ENCODE measurements at regions of chr12 and their contacts with region 1.

Region 1: GRCh38 chr12:68610370-68611093 is at the start of gene RAP1B:
- DNase-seq: peak; percentile 69
- ATAC-seq: peak; percentile 93
- H3K4me3 ChIP-seq: peak within 1 kb of the TSS; percentile 90 to 95
- H3K27ac ChIP-seq: peak within 1 kb of the TSS; percentile 78
- H3K4me1 ChIP-seq: peaks cover 8 to 26% of the 10 kb centered on the region in 2 experiments; a peak in 3 of 4 replicates
- H3K27me3 ChIP-seq: no peaks in the 10 kb centered on the region
- CTCF ChIP-seq: no peak
- POLR2A ChIP-seq: peak; percentile 75
- RAD21 ChIP-seq: no peak
- total RNA-seq, gene RAP1B: 79.2 TPM

Region 2: DNA sequence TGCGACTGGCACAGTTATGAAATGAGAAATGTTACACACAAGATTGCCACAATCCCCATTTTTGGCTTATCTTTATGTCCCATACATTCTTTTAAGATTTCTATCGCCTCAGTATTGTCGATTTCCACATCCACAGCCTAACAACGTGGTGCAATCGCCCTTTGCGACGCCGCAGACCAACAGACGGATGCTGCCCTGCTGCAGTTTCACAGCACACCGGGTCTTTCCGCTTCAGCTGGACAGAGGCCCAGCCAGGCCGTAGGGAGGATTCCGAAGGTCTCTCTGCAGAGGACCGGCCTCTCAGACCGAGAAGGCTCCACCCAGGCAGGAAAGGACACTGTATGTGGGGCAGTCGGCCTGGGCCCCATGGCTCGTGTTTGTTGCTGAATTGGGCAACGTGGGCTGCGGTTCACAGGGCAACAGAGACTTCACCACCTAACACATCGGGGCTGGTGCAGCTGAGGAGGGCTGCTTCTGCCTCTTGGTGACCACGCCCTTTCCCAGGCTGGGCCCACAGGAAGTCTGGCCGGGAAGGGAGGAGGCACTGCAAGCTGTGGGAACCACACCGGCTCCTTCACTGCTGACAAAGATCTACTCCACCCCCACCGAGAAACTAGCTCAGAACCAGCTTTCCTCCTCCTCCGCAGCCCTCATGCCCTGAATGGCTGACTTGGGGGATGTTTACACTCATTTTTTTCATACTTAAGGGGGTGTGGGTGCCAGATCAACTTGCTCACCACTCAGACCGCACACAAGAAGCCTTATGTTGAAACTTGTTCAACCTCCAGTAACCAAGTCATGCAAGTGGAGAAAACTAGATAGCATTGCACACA is 245.4 kb before region 1 on chr12:
- CTCF ChIA-PET with region 1: no interaction called
- POLR2A ChIA-PET with region 1: no interaction called
- RAD21 ChIA-PET with region 1: interaction called in 1 of 2 experiments, 3 read pairs
- intact Hi-C with region 1: loop called (anchors 10 kb)
- DNase-seq: peak; percentile 57
- ATAC-seq: peak; percentile 100
- H3K4me3 ChIP-seq: peak overlapping the region; percentile 39 to 56
- H3K27ac ChIP-seq: peak overlapping the region; percentile 46; the same call in 1 of the 2 replicates
- H3K4me1 ChIP-seq: peaks cover 7 to 16% of the 10 kb centered on the region in 2 experiments; a peak in 3 of 4 replicates
- H3K27me3 ChIP-seq: no peaks in the 10 kb centered on the region
- CTCF ChIP-seq: no peak
- POLR2A ChIP-seq: peak; percentile 62
- RAD21 ChIP-seq: no peak

Region 3: GRCh38 chr12:68585966-68586365 is 24.6 kb before region 1 on chr12:
- CTCF ChIA-PET with region 1: no interaction called
- POLR2A ChIA-PET with region 1: no interaction called
- RAD21 ChIA-PET with region 1: interaction called in 1 of 2 experiments, 3 read pairs
- intact Hi-C with region 1: loop called (anchors 2 kb)
- DNase-seq: no peak
- ATAC-seq: no peak
- H3K4me3 ChIP-seq: no peak overlapping the region
- H3K27ac ChIP-seq: no peak overlapping the region
- H3K4me1 ChIP-seq: peaks cover 7 to 26% of the 10 kb centered on the region in 2 experiments
- H3K27me3 ChIP-seq: no peaks in the 10 kb centered on the region
- CTCF ChIP-seq: no peak
- POLR2A ChIP-seq: no peak
- RAD21 ChIP-seq: no peak

Region 4: GRCh38 chr12:68623984-68624383 is 13.5 kb after region 1 on chr12:
- CTCF ChIA-PET with region 1: no interaction called
- POLR2A ChIA-PET with region 1: no interaction called
- RAD21 ChIA-PET with region 1: no interaction called
- intact Hi-C with region 1: no loop called
- DNase-seq: no peak
- ATAC-seq: no peak
- H3K4me3 ChIP-seq: no peak overlapping the region
- H3K27ac ChIP-seq: no peak overlapping the region
- H3K4me1 ChIP-seq: peaks cover 0 to 6% of the 10 kb centered on the region in 2 experiments; a peak in 2 of 4 replicates
- H3K27me3 ChIP-seq: no peaks in the 10 kb centered on the region
- CTCF ChIP-seq: no peak
- POLR2A ChIP-seq: no peak
- RAD21 ChIP-seq: no peak

Region 5: GRCh38 chr12:68686595-68687521 is 76.3 kb after region 1 on chr12 and contains the start of gene NUP107:
- CTCF ChIA-PET with region 1: no interaction called
- POLR2A ChIA-PET with region 1: no interaction called
- RAD21 ChIA-PET with region 1: no interaction called
- intact Hi-C with region 1: loop called (anchors 5 kb)
- DNase-seq: peak; percentile 97
- ATAC-seq: peak; percentile 91
- H3K4me3 ChIP-seq: peak within 1 kb of the TSS; percentile 77 to 99
- H3K27ac ChIP-seq: peak within 1 kb of the TSS; percentile 72
- H3K4me1 ChIP-seq: peaks cover 16 to 18% of the 10 kb centered on the region in 2 experiments; a peak in 3 of 4 replicates
- H3K27me3 ChIP-seq: no peaks in the 10 kb centered on the region
- CTCF ChIP-seq: 0 out of 6 replicates have a peak, but pooled peaks of 1 of the 3 experiments have one; percentile 2
- POLR2A ChIP-seq: peak; percentile 76
- RAD21 ChIP-seq: 0 out of 2 replicates have a peak, but pooled peaks have one; percentile 3
- total RNA-seq, gene NUP107: 99.0 TPM